IMR-90 (cell line): ENCODE measurements at regions of chr1 and their contacts with region 1.

Region 1: GRCh38 chr1:32521165-32521564 is 18.1 kb upstream of the ZBTB8A start:
- DNase-seq: no peak
- ATAC-seq: no peak
- H3K4me3 ChIP-seq: no peak overlapping the region
- H3K27ac ChIP-seq: no peak overlapping the region
- H3K4me1 ChIP-seq: no peaks in the 10 kb centered on the region
- H3K27me3 ChIP-seq: no peaks in the 10 kb centered on the region
- CTCF ChIP-seq: no peak
- POLR2A ChIP-seq: no peak
- RAD21 ChIP-seq: no peak

Region 2: DNA sequence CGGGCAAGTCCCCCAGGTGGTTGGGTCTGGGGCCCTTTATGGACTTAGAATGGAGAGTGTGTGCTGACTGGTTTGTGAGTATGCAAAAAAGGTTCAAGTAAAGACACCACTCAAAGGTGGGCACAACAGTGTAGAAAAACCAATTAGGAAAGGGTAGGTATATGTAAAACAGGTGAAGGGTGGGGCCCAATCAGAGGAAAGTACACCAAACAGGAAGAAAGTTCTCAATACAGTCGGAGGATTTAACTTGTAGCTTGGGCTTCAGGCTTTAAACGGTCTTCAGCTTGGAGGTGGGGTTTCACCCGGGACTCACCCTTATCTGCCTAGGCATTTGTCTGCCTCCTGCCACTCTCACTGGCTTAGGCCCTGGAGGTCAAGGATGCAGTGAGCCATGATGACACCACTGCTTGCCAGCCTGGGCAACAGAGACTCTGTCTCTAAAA is 1448.8 kb before region 1 on chr1:
- CTCF ChIA-PET with region 1: no interaction called
- POLR2A ChIA-PET with region 1: no interaction called
- dilution Hi-C with region 1: no loop called
- in situ Hi-C with region 1: no loop called
- intact Hi-C with region 1: loop called (anchors 10 kb)
- DNase-seq: no peak
- ATAC-seq: no peak
- H3K4me3 ChIP-seq: no peak overlapping the region
- H3K27ac ChIP-seq: no peak overlapping the region
- H3K4me1 ChIP-seq: no peaks in the 10 kb centered on the region
- H3K27me3 ChIP-seq: no peaks in the 10 kb centered on the region
- CTCF ChIP-seq: no peak
- POLR2A ChIP-seq: no peak
- RAD21 ChIP-seq: no peak

Region 3: DNA sequence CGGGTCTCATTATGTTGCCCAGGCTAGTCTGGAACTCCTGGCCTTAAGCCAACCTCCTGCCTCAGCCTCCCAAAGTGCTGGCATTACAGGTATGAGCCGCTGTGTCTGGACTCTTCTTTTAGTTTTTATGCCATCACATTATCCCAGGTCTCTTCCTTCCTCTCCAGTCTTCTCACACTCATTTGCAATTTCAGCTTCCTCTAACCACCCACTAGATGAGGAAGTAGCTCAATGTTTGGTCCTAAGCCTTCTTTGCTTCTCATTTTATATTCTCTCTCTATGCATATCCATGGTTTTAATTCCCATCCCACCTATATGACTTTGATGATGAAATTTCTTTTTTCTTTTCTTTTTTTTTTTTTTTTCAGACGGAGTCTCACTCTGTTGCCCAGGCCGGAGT is 15.0 kb after region 1 on chr1:
- CTCF ChIA-PET with region 1: interaction called, 23 read pairs
- POLR2A ChIA-PET with region 1: no interaction called
- dilution Hi-C with region 1: no loop called
- in situ Hi-C with region 1: no loop called
- intact Hi-C with region 1: no loop called
- DNase-seq: no peak
- ATAC-seq: no peak
- H3K4me3 ChIP-seq: no peak overlapping the region
- H3K27ac ChIP-seq: no peak overlapping the region
- H3K4me1 ChIP-seq: no peaks in the 10 kb centered on the region
- H3K27me3 ChIP-seq: peaks cover 6% of the 10 kb centered on the region
- CTCF ChIP-seq: no peak
- POLR2A ChIP-seq: no peak
- RAD21 ChIP-seq: no peak

Region 4: DNA sequence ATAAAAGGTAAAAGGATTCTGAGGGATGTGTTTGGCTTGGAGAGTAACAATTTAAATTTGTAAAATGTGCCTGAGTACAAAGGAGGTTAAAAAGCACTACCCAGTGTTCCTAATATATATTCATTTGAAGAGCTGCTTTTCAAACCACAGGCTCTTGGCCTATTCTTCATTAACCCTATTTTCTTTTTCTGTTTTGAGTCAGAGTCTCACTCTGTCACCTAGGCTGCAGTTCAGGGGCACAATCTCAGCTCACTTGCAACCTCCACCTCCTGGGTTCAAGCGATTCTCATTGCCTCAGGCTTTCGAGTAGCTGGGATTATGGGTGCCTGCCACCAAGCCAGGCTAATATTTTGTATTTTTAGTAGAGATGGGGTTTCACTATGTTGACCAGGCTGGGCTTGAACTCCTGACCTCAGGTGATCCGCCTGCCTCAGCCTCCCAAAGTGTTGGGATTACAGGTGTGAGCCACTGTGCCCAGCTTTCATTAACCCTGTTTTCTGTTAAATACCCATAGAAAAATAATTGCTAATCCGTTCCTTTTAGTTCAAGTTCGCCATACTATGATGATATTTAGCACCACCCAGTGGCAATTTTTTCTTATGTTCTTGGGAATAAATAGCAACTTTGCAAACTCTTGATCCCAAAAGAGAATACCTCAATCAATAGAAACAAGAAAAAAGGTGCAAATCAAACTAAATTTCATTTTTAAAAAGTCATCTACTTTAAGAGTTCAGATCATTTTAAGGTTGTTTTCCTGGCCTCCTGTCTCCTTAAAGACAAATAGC is 98.7 kb after region 1 on chr1:
- CTCF ChIA-PET with region 1: interaction called, 10 read pairs
- POLR2A ChIA-PET with region 1: no interaction called
- dilution Hi-C with region 1: no loop called
- in situ Hi-C with region 1: no loop called
- intact Hi-C with region 1: no loop called
- DNase-seq: peak; percentile 29
- ATAC-seq: no peak
- H3K4me3 ChIP-seq: no peak overlapping the region
- H3K27ac ChIP-seq: no peak overlapping the region
- H3K4me1 ChIP-seq: no peaks in the 10 kb centered on the region
- H3K27me3 ChIP-seq: no peaks in the 10 kb centered on the region
- CTCF ChIP-seq: peak; percentile 32
- POLR2A ChIP-seq: no peak
- RAD21 ChIP-seq: no peak

Region 5: GRCh38 chr1:32773018-32773763 is 252.0 kb after region 1 on chr1:
- CTCF ChIA-PET with region 1: interaction called, 3 read pairs
- POLR2A ChIA-PET with region 1: no interaction called
- dilution Hi-C with region 1: no loop called
- in situ Hi-C with region 1: no loop called
- intact Hi-C with region 1: loop called (anchors 1 kb)
- DNase-seq: peak; percentile 74
- ATAC-seq: peak; percentile 80
- H3K4me3 ChIP-seq: no peak overlapping the region
- H3K27ac ChIP-seq: no peak overlapping the region
- H3K4me1 ChIP-seq: peaks cover 6% of the 10 kb centered on the region
- H3K27me3 ChIP-seq: no peaks in the 10 kb centered on the region
- CTCF ChIP-seq: peak; percentile 93
- POLR2A ChIP-seq: 0 out of 2 replicates have a peak, but pooled peaks have one; percentile 23
- RAD21 ChIP-seq: peak; percentile 90

Region 6: DNA sequence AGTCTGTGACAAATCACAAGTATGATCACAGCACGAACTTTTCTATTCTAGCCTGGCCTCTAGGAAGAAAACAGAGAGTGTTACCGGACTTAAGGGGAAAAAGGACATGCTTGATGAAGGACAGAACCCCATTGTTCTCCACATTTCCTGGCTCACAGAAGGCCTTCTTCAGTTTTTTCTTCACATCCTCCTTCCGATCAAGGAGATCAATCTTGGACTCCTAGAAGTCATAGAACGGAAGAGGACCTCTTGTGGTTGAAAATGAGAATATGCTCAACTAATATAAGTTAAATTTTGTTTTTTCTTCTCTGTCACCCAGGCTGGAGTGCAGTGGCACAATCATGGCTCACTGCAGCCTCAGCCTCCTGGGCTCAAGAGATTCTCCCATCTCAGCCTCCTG is 265.7 kb after region 1 on chr1:
- CTCF ChIA-PET with region 1: interaction called, 10 read pairs
- POLR2A ChIA-PET with region 1: no interaction called
- dilution Hi-C with region 1: no loop called
- in situ Hi-C with region 1: no loop called
- intact Hi-C with region 1: no loop called
- DNase-seq: no peak
- ATAC-seq: no peak
- H3K4me3 ChIP-seq: no peak overlapping the region
- H3K27ac ChIP-seq: no peak overlapping the region
- H3K4me1 ChIP-seq: peaks cover 4% of the 10 kb centered on the region; the same call in 1 of the 2 replicates
- H3K27me3 ChIP-seq: no peaks in the 10 kb centered on the region
- CTCF ChIP-seq: peak; percentile 33
- POLR2A ChIP-seq: no peak
- RAD21 ChIP-seq: no peak

Region 7: GRCh38 chr1:32876341-32877210 is 355.4 kb after region 1 on chr1:
- CTCF ChIA-PET with region 1: interaction called, 3 read pairs
- POLR2A ChIA-PET with region 1: no interaction called
- dilution Hi-C with region 1: no loop called
- in situ Hi-C with region 1: no loop called
- intact Hi-C with region 1: loop called (anchors 1 kb)
- DNase-seq: no peak
- ATAC-seq: peak; percentile 58
- H3K4me3 ChIP-seq: no peak overlapping the region
- H3K27ac ChIP-seq: no peak overlapping the region
- H3K4me1 ChIP-seq: no peaks in the 10 kb centered on the region
- H3K27me3 ChIP-seq: peaks cover 23% of the 10 kb centered on the region
- CTCF ChIP-seq: peak; percentile 58
- POLR2A ChIP-seq: no peak
- RAD21 ChIP-seq: peak; percentile 51